Aorta (tissue), 5 donors: ENCODE measurements at regions of chr3 and their contacts with region 1.

Region 1: DNA sequence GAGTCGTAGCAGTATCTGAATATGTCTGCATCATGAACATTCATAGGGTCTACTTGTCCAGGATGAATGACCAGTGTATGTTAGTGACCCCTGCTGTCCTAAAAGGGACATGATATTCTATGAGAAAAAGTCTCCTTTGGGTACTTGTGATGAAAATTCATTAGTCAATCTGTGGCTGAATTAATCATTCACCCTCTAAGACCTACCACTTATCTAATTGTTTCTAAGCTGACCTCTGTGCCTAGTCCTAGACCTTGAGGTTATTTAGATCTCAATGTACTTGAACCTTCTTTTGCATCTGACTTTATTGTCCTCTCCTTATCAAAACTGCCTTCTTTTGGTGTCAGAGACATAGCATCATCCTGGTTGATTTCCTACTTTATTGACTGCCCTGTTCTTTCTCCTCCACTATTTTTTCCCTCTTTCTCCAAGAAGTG is 799.3 kb downstream of the DIPK2A start:
- DNase-seq: no peak
- ATAC-seq: no peak
- H3K4me3 ChIP-seq: no peak overlapping the region
- H3K27ac ChIP-seq: no peak overlapping the region
- H3K4me1 ChIP-seq: no peaks in the 10 kb centered on the region
- H3K27me3 ChIP-seq: no peaks in the 10 kb centered on the region

Region 2: GRCh38 chr3:143895805-143896204 is 875.1 kb before region 1 on chr3:
- intact Hi-C with region 1: loop called in 1 of 2 experiments (anchors 10 kb)
- DNase-seq: no peak
- ATAC-seq: no peak
- H3K4me3 ChIP-seq: no peak overlapping the region
- H3K27ac ChIP-seq: no peak overlapping the region
- H3K4me1 ChIP-seq: no peaks in the 10 kb centered on the region
- H3K27me3 ChIP-seq: no peaks in the 10 kb centered on the region

Region 3: GRCh38 chr3:144544871-144545270 is 226.1 kb before region 1 on chr3:
- intact Hi-C with region 1: no loop called
- DNase-seq: no peak
- ATAC-seq: no peak
- H3K4me3 ChIP-seq: no peak overlapping the region
- H3K27ac ChIP-seq: no peak overlapping the region
- H3K4me1 ChIP-seq: no peaks in the 10 kb centered on the region
- H3K27me3 ChIP-seq: no peaks in the 10 kb centered on the region